SK-N-SH (cell line): ENCODE measurements at regions of chr1 and their contacts with region 1.

Region 1: GRCh38 chr1:65958561-65959350 is 166.1 kb downstream of the PDE4B start:
- DNase-seq: peak; percentile 46
- H3K4me3 ChIP-seq: no peak overlapping the region
- H3K27ac ChIP-seq: no peak overlapping the region; a peak in 1 of 4 replicates
- H3K4me1 ChIP-seq: peaks cover 0 to 8% of the 10 kb centered on the region in 2 experiments; a peak in 1 of 4 replicates
- H3K27me3 ChIP-seq: no peaks in the 10 kb centered on the region
- CTCF ChIP-seq: peak; percentile 82
- EP300 ChIP-seq: no peak
- RAD21 ChIP-seq: peak; percentile 98

Region 2: DNA sequence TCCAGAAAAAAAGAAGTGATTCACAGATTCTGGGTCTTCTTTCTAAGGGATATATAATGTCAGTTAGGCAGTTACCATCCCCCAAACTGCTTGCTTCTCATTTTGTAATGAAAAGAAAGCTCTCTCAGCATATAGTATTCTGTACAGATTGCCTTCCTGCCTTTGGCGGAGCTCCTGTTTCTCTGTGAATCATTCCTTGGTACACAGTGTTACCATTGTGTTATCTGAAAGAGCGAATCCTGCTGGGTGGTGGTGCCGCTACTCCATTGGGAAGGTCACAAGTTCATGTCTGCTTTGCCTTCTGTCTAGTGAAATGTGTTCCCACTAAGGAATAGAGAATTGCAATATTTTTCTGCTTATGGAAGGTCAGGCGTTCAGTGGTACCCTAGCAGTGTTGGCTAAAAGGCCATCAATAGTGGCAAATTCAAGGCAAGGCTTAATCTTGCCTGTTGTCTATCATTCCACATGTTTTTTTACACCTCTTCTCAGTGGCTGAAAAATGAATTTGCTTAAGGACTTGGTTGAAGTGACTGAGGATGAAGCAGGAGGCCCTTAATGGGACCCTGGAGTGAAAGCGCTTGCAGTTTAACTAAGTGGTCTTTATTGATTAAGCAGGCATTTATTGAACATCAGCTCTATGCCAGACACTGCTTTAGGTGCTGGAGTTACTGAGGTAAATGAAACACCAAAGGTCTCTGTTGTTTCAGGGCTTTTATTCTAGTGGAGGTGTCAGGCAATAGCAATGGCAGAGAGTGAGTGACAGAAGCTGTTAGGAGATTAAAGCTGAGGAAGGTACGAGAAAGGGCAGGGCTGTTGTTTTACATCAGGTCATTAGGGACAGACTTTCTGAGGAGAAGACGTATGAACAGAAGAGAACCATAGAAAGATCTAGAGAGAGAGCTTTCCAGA is 20.6 kb after region 1 on chr1:
- CTCF ChIA-PET with region 1: no interaction called
- POLR2A ChIA-PET with region 1: no interaction called
- DNase-seq: no peak
- H3K4me3 ChIP-seq: no peak overlapping the region
- H3K27ac ChIP-seq: no peak overlapping the region
- H3K4me1 ChIP-seq: no peaks in the 10 kb centered on the region
- H3K27me3 ChIP-seq: no peaks in the 10 kb centered on the region
- CTCF ChIP-seq: no peak
- EP300 ChIP-seq: no peak
- RAD21 ChIP-seq: no peak

Region 3: DNA sequence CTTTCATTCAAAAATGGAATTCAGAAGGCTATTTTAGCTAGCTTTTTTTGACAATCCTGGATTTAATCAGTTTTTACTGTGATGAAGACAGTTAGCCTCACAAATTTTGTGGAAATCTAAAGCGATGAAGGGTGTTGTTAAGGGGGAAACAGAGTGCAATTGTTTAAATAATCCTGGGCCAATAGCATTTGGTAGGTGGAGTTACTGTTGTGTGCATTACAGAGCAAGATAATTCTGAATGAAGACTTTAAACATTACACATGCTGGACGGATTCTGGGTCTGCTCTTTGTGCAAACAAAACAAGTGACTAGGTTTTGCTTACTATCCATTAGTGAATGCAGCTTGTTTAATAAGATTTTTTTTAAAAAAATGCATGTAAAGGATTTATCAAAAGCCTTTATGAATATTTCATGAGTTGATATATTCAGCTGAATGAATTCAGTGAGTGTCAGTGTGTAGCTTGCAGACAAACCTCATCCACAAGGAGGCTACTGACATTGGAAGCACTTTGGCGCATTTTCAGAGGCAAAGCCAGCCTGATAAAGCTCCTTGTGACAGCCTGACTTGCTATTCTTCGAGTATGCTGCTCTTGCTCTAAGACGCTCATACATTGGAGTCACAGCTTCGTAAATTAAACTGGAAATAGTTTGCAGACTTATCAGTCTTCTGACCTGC is 33.5 kb after region 1 on chr1:
- CTCF ChIA-PET with region 1: interaction called, 18 read pairs
- POLR2A ChIA-PET with region 1: no interaction called
- DNase-seq: peak; percentile 10
- H3K4me3 ChIP-seq: peak overlapping the region; percentile 49 to 56
- H3K27ac ChIP-seq: peak overlapping the region; percentile 8 to 91; a peak in 3 of 4 replicates
- H3K4me1 ChIP-seq: peaks cover 3 to 5% of the 10 kb centered on the region in 2 experiments; a peak in 3 of 4 replicates
- H3K27me3 ChIP-seq: no peaks in the 10 kb centered on the region
- CTCF ChIP-seq: peak; percentile 44
- EP300 ChIP-seq: no peak
- RAD21 ChIP-seq: peak; percentile 45

Region 4: DNA sequence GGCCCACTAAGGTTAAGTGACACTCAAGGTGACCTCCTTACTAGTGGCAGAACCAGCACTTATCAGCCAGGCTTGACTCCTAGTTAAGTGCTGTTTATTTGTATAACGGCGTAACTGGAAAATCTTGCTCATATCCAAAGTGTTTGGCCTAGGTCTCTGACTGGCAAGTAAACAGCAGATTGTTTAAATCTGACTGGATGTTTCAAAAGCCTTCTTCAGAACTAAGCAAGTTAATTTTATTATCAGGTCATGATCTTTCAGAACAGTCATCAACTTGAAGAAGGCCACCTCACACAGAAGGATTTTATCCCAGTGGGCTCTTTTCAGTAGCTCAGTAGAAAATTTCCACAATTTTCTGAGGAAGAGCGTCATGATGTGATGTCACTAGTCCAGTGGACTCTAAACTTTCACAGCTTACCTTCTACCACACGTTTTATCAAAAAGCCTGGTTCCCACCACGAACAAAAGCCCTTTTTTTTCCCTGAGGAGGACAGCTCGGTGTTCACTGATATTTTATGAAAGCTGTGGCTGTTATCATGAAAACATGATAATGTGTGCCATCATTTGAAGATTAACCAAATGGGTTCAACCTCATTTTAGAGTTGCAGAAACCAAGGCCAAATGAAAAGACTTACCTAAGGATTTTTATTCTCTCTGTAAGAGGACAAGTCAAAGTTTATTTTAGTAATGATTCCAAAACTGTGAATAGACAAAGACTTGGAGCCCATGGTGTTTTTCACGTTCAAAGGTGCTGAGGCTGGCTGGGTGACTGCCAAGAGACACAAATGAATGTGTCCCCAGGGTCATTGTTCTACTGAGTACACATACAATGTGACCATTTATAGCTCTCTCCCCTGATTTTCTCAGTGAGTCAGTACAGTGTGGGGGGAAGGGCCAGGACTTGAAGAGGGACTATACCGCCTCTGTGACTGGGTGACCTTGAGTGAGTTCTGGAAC is 584.3 kb after region 1 on chr1:
- CTCF ChIA-PET with region 1: no interaction called
- POLR2A ChIA-PET with region 1: no interaction called
- DNase-seq: no peak
- H3K4me3 ChIP-seq: no peak overlapping the region
- H3K27ac ChIP-seq: peak overlapping the region; percentile 22 to 58; a peak in 3 of 4 replicates
- H3K4me1 ChIP-seq: peaks cover 23 to 38% of the 10 kb centered on the region in 2 experiments
- H3K27me3 ChIP-seq: no peaks in the 10 kb centered on the region
- CTCF ChIP-seq: no peak
- EP300 ChIP-seq: no peak
- RAD21 ChIP-seq: no peak